ENCODE measurements at regions of chr3 and their contacts with region 1.

Region 1: DNA sequence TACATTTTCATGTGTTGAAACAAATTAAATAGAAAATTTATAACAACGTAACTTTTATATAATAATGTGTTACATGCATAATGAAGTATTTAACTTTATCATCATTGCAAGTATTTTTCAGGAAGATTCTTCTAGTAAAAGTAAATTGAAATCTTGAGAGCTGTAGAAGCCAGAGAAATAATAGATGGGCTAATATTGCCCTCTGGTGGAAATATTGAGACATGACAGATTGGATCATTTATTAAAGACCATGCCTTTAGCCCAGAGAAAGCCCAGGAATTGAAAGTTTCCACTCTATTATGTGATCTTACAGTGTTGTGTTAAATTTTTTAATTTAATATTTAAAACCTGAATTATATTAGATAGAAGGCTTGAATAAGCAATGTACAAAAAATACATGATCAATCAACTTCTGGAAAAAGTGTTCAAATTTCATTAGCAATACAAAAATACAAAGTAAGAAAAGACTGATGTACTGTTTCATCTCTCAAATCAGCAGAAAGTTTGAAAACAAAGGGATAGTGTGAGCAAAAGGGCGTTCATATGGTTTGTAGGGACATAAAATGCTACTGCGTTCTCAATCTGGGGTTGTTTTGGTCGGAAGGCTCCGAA is 52.7 kb upstream of the SPTSSB start:
- DNase-seq: no peak
- H3K4me3 ChIP-seq: no peak overlapping the region
- H3K27ac ChIP-seq: no peak overlapping the region
- H3K4me1 ChIP-seq: no peaks in the 10 kb centered on the region
- H3K27me3 ChIP-seq: no peaks in the 10 kb centered on the region
- CTCF ChIP-seq: peak; percentile 70 to 84 (median 79)
- EP300 ChIP-seq: no peak
- POLR2A ChIP-seq: no peak

Region 2: GRCh38 chr3:160707187-160707794 is 716.7 kb before region 1 on chr3:
- in situ Hi-C with region 1: loop called in 2 of 4 experiments (anchors 25 kb)
- intact Hi-C with region 1: no loop called
- DNase-seq: peak; percentile 20
- H3K4me3 ChIP-seq: no peak overlapping the region
- H3K27ac ChIP-seq: no peak overlapping the region
- H3K4me1 ChIP-seq: no peaks in the 10 kb centered on the region
- H3K27me3 ChIP-seq: peaks cover 7% of the 10 kb centered on the region
- CTCF ChIP-seq: peak; percentile 49 to 62 (median 56)
- EP300 ChIP-seq: no peak
- POLR2A ChIP-seq: no peak

Region 3: DNA sequence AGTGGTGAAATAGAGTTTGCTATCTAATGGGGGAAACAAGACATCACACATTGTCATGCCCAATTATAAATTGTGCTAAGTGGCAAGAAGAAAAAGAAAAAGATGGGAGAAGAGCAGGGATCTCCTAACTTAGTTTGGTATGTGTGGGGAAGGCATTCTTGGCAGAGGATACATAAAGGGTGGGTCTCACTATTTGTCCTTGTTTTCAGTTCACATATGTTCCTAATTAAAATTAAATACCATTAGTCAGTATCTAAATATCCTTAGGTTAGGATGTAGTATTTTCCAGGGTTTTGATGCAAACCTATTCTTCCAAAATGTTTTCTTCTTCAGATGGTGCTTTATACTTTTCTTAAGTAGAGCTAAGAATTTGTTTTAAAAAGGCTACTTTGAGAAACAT is 492.5 kb before region 1 on chr3:
- in situ Hi-C with region 1: loop called in 1 of 4 experiments (anchors 10 kb)
- intact Hi-C with region 1: no loop called
- DNase-seq: no peak
- H3K4me3 ChIP-seq: no peak overlapping the region
- H3K27ac ChIP-seq: no peak overlapping the region
- H3K4me1 ChIP-seq: peaks cover 0 to 5% (median 0%) of the 10 kb centered on the region in 4 donors
- H3K27me3 ChIP-seq: no peaks in the 10 kb centered on the region
- CTCF ChIP-seq: no peak
- EP300 ChIP-seq: no peak
- POLR2A ChIP-seq: no peak

Region 4: GRCh38 chr3:161274719-161275298 is 149.2 kb before region 1 on chr3:
- in situ Hi-C with region 1: loop called (anchors 5 to 10 kb)
- intact Hi-C with region 1: loop called (anchors 10 kb)
- DNase-seq: peak; percentile 18
- H3K4me3 ChIP-seq: no peak overlapping the region
- H3K27ac ChIP-seq: no peak overlapping the region
- H3K4me1 ChIP-seq: peaks cover 0 to 8% (median 0%) of the 10 kb centered on the region in 4 donors
- H3K27me3 ChIP-seq: no peaks in the 10 kb centered on the region
- CTCF ChIP-seq: peak in 4 of 5 experiments; percentile 23 to 45 (median 34)
- EP300 ChIP-seq: no peak
- POLR2A ChIP-seq: no peak